BJ (cell line): ENCODE measurements at regions of chr22 and their contacts with region 1.

Region 1: GRCh38 chr22:32926600-32926999 is 125.1 kb downstream of the TIMP3 start:
- DNase-seq: no peak
- H3K4me3 ChIP-seq: no peak overlapping the region
- H3K27me3 ChIP-seq: peaks cover 6% of the 10 kb centered on the region
- CTCF ChIP-seq: peak; percentile 75

Region 2: GRCh38 chr22:32911503-32911902 is 15.1 kb before region 1 on chr22:
- CTCF ChIA-PET with region 1: interaction called, 12 read pairs
- POLR2A ChIA-PET with region 1: no interaction called
- DNase-seq: no peak
- H3K4me3 ChIP-seq: no peak overlapping the region
- H3K27me3 ChIP-seq: peaks cover 9% of the 10 kb centered on the region
- CTCF ChIP-seq: no peak